CD14-positive monocyte (primary cell): ENCODE measurements at regions of chr9 and their contacts with region 1.

Region 1: DNA sequence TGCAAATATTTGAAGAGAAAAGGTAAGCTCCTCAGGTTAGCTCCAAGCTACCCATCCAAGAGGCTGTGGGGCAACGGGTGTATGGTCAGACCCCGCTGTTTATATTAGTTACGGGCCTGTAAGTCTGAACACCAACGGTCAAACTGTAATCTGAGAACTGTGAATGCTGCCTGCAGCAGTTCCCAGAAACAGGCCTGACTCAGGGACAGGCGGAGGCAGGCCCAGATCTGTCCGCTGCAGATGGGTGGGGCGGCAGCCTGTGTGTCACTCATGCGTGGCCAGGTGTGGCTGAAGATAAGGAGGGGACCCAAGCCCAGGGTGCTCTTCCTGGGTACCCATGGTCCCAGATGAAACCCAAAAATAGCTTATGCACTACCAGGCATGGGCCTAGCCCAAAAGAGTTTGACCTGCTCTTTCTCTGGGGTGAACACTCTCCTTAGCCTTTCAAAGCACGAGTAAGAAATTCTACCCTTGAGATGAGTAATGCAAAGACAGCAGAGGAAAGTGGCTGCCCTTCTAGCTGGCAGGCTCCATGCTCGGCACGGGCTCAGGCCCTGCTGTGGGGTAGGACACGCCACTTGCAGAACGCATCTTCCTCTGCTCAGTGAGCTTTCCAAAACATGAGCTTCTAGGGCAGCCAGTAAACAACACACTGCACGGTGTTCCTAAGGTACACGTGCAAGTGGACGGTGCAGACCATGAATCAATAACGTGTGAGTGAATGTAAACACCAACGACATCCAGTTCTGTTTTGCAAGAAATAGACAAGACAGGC is 9.1 kb downstream of the UBAC1 start:
- DNase-seq: no peak
- H3K4me3 ChIP-seq: no peak overlapping the region
- H3K4me3 Mint-ChIP-seq: no peak overlapping the region
- H3K27ac ChIP-seq: no peak overlapping the region
- H3K27ac Mint-ChIP-seq: peak overlapping the region in 1 of 7 donors; percentile 3
- H3K4me1 ChIP-seq: no peaks in the 10 kb centered on the region
- H3K4me1 Mint-ChIP-seq: no peaks in the 10 kb centered on the region
- H3K27me3 ChIP-seq: no peaks in the 10 kb centered on the region
- H3K27me3 Mint-ChIP-seq: peaks cover 0 to 1% (median 0%) of the 10 kb centered on the region in 3 donors
- CTCF ChIP-seq: no peak

Region 2: GRCh38 chr9:135971892-135972291 is 19.8 kb after region 1 on chr9:
- intact Hi-C with region 1: no loop called
- DNase-seq: no peak
- H3K4me3 ChIP-seq: no peak overlapping the region
- H3K4me3 Mint-ChIP-seq: no peak overlapping the region
- H3K27ac ChIP-seq: no peak overlapping the region
- H3K27ac Mint-ChIP-seq: peak overlapping the region in 1 of 7 donors; percentile 54
- H3K4me1 ChIP-seq: peaks cover 44 to 49% of the 10 kb centered on the region in 2 donors
- H3K4me1 Mint-ChIP-seq: peaks cover 46% of the 10 kb centered on the region
- H3K27me3 ChIP-seq: no peaks in the 10 kb centered on the region
- H3K27me3 Mint-ChIP-seq: peaks cover 1 to 9% (median 2%) of the 10 kb centered on the region in 3 donors
- CTCF ChIP-seq: no peak

Region 3: DNA sequence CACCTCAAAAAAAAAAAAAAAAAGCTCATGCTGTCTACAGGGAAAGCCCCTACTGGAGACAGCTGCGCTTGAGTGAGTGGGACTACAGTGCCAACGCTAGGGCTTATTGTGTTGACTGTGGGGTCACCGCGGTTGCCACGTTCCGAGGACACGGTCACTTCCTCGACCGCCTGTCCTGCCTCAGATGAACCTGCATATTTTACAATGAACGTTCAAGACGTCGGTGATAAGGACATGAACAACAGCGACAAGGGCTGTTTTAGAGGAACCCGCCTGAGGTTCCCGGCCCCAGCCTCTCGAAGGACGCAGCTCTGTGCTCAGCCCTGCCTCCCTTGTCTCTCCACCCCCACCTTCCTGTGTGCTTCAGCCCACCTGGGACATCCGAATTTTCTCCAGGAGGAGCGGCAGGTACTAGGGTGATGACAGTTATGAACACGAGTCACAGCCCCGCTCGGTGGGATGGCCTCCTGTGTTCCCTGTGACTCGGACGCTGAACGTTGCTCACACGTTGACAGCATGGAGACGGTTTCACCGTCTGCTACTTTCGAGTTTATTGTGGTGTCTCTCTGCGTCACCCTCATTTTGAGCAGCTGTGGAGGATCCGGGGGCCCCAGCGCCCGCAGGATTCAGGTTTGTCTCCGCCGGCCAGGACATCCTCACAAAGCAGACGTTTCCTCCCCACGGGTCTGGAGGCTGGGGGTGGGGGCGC is 749.0 kb after region 1 on chr9:
- intact Hi-C with region 1: loop called in 1 of 2 experiments (anchors 10 kb)
- DNase-seq: peak; percentile 78 to 89 (median 85)
- H3K4me3 ChIP-seq: peak overlapping the region in 1 of 3 experiments; percentile 55
- H3K4me3 Mint-ChIP-seq: peak overlapping the region; percentile 73 to 87
- H3K27ac ChIP-seq: peak overlapping the region; percentile 50 to 86
- H3K27ac Mint-ChIP-seq: peak overlapping the region; percentile 87 to 94 (median 92)
- H3K4me1 ChIP-seq: peaks cover 71 to 79% of the 10 kb centered on the region in 2 donors
- H3K4me1 Mint-ChIP-seq: peaks cover 72% of the 10 kb centered on the region
- H3K27me3 ChIP-seq: peaks cover 2 to 15% of the 10 kb centered on the region in 2 donors
- H3K27me3 Mint-ChIP-seq: peaks cover 14 to 34% (median 20%) of the 10 kb centered on the region in 3 donors
- CTCF ChIP-seq: no peak